Activated CD8-positive, alpha-beta T cell treated with anti-CD3 and anti-CD28 coated beads for 36 hours (primary cell): ENCODE measurements at regions of chrX and their contacts with region 1.

Region 1: GRCh38 chrX:2595258-2595657 is 94.5 kb upstream of the DHRSX start:
- DNase-seq: no peak
- ATAC-seq: no peak
- H3K4me3 Mint-ChIP-seq: no peak overlapping the region
- H3K27ac Mint-ChIP-seq: no peak overlapping the region
- H3K4me1 Mint-ChIP-seq: peaks cover 3% of the 10 kb centered on the region
- H3K27me3 Mint-ChIP-seq: no peaks in the 10 kb centered on the region
- CTCF ChIP-seq: no peak

Region 2: GRCh38 chrX:1649621-1650020 is 945.6 kb before region 1 on chrX:
- CTCF ChIA-PET with region 1: no interaction called
- POLR2A ChIA-PET with region 1: no interaction called
- intact Hi-C with region 1: loop called (anchors 2 kb)
- DNase-seq: no peak
- ATAC-seq: no peak
- H3K4me3 Mint-ChIP-seq: no peak overlapping the region
- H3K27ac Mint-ChIP-seq: no peak overlapping the region
- H3K4me1 Mint-ChIP-seq: peaks cover 6% of the 10 kb centered on the region
- H3K27me3 Mint-ChIP-seq: peaks cover 3% of the 10 kb centered on the region
- CTCF ChIP-seq: no peak

Region 3: DNA sequence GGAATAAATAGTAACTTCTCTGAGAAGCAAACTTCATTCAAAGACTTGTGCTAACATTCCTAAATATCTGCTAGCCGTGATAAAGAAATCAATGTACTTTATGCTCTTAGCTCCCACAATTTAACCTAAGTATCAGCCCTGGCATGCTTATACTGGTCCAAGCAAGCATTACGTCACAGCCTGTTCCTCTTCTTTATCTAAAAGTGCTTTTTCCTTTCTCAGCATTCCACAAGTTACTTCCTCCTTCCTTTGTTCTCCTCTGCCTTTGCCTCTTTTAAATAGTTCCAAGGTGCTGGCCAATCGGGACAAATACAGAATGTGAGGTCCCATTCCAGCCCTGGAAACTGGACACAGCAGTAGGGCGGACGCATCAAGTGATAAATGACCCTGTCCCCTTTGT is 344.0 kb before region 1 on chrX:
- CTCF ChIA-PET with region 1: no interaction called
- POLR2A ChIA-PET with region 1: no interaction called
- intact Hi-C with region 1: no loop called
- DNase-seq: no peak
- ATAC-seq: no peak
- H3K4me3 Mint-ChIP-seq: no peak overlapping the region
- H3K27ac Mint-ChIP-seq: no peak overlapping the region
- H3K4me1 Mint-ChIP-seq: no peaks in the 10 kb centered on the region
- H3K27me3 Mint-ChIP-seq: no peaks in the 10 kb centered on the region
- CTCF ChIP-seq: no peak